ENCODE measurements at regions of chr1 and their contacts with region 1.

Region 1: DNA sequence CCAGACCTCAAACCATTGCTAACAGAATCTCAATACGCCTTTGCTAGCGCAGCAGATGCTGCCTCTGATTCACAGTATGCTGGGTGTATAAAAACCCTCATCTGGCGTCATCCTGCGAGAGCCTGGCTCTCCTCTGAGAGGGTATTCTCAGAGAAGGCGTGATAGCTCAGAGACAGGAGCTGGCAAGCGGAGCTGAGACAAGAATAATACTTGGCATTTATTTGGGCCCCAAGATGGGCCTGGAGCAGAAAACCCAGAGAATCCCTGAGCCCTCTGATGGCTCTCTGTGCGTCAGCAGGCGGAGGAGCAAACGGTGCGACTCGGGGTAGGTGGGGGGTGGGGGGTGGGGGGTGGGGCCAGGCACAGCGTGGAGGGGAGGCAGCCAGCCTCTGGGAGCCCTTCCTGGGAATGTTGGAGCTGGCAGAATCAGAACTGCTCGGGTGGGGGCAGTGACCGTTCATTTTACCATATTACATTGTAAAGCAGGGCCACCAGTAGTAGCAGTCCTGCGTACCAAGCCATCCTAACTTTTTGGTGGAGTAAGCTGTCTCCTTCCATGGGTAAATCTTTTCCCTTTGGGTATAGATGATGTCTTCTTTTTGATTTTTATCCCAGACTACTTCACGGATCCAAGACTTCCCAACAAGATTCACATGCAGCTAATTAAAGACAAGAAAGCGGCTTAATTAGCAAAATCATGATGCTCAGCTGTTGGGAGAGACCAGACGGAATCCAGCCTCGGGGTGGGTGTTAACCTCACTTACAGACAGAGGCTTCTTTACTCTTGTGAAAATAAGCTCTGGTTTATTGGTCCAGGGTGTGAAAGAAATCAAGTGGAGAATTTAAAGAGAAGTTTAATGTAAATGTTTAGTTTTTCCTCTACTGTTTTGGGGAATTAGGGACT is 7.1 kb downstream of the RIIAD1 start:
- DNase-seq: no peak
- H3K4me3 Mint-ChIP-seq: no peak overlapping the region
- H3K27ac Mint-ChIP-seq: no peak overlapping the region
- H3K4me1 Mint-ChIP-seq: no peaks in the 10 kb centered on the region
- H3K27me3 Mint-ChIP-seq: peaks cover 27% of the 10 kb centered on the region
- CTCF ChIP-seq: no peak

Region 2: DNA sequence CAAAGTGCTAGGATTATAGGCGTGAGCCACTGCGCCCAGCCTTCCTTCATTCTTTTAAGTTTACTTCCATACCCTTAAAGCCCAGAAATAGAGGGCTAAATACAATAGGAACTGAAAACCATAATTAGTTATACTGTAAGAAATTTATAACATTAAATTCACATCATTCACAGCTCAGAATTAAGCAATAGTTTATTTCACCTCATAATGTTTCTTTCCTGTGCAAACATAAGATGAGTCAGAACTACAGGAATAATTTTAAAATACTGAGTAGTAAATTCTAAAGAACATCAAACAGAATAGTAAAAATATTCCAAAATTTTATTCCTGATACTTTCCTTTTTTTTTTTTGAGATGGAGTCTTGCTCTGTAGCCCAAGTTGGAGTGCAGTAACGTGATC is 293.2 kb before region 1 on chr1:
- CTCF ChIA-PET with region 1: interaction called, 23 read pairs
- POLR2A ChIA-PET with region 1: no interaction called
- intact Hi-C with region 1: no loop called
- DNase-seq: peak; percentile 13
- H3K4me3 Mint-ChIP-seq: no peak overlapping the region
- H3K27ac Mint-ChIP-seq: peak overlapping the region; percentile 14
- H3K4me1 Mint-ChIP-seq: peaks cover 6% of the 10 kb centered on the region
- H3K27me3 Mint-ChIP-seq: no peaks in the 10 kb centered on the region
- CTCF ChIP-seq: no peak

Region 3: DNA sequence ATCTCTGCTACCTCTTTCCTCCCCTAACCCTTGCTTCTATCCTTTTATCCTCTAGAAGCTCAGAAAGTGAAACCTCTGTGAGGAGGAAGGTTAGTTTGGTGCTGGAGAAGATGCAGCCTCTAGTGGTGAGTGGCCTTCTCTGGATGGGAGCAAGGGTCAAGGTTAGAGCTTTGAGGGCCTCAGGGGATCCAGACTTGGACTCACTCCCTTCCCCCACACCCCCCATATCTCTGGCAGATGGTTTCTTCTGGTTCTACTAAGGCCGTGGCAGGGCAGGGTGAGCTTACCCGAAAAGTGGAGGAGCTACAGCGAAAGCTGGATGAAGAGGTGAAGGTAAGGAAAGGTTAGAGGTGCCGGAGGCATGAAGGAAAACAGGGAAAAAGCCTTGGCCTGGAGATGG is 208.0 kb before region 1 on chr1:
- CTCF ChIA-PET with region 1: interaction called, 14 read pairs
- POLR2A ChIA-PET with region 1: no interaction called
- intact Hi-C with region 1: no loop called
- DNase-seq: no peak
- H3K4me3 Mint-ChIP-seq: no peak overlapping the region
- H3K27ac Mint-ChIP-seq: peak overlapping the region; percentile 49
- H3K4me1 Mint-ChIP-seq: peaks cover 9% of the 10 kb centered on the region
- H3K27me3 Mint-ChIP-seq: no peaks in the 10 kb centered on the region
- CTCF ChIP-seq: no peak

Region 4: DNA sequence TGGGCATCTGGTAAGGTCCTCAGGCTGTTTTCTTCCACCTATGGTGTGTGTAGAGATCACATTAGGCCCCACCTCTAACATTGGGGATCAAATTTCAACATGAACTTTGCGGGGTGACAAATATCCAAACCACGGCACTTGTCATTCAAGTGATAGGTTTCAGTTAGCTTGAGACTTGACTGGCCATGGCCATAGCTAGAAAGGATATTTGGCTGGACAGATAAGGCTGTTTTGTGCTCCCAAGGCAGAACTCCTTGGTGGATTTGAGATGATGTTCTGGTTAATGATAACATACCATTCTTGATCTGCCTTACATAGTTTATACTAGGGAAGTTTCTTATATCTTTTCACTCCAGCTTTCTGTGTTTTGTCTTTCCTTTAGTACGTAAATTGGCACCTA is 60.3 kb before region 1 on chr1:
- CTCF ChIA-PET with region 1: interaction called, 12 read pairs
- POLR2A ChIA-PET with region 1: no interaction called
- intact Hi-C with region 1: no loop called
- DNase-seq: no peak
- H3K4me3 Mint-ChIP-seq: no peak overlapping the region
- H3K27ac Mint-ChIP-seq: no peak overlapping the region
- H3K4me1 Mint-ChIP-seq: no peaks in the 10 kb centered on the region
- H3K27me3 Mint-ChIP-seq: no peaks in the 10 kb centered on the region
- CTCF ChIP-seq: no peak

Region 5: DNA sequence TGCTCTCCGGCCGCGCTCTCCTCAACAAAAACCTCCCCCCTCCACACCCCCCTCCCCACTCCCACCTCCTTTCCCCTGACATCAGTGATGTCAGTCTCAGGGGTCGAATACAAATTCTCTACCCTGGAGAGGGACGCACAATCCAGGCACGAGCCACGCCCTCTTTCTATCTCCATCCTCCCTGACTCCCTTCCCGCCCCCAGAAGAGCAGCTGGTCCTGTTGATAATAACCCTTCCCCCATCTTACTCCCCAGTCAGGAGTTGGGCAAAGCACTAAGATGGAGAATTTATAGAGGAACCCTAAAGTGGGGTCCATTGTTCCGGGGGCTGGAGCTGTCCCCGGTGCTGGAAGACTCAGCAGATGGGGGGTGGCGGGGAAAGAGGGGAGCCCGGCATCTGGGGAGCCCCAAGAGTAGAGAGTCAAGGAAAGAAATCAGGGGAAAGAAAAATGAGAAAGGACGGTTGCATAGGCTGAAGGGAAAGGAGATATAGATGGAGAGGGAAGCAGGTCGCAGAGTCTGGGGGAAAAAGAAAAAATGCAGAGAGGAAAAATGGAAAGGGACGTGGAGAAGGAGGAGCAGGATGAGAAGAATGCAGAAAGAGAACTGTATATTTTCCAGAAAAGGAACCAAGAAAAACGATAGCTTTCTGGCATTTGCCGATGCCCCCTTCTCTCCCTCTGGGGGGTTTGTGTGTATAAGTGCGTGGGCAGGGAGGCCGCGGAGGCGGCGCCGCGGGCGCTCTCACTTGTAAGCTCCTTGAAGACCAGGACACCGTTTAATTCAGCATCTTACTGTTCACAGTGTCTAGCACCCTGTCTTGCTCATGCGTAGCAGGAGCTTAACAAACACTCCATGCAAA is 11.4 kb before region 1 on chr1 and contains the start of gene CELF3:
- CTCF ChIA-PET with region 1: interaction called, 16 read pairs
- POLR2A ChIA-PET with region 1: interaction called, 6 read pairs
- intact Hi-C with region 1: no loop called
- DNase-seq: no peak
- H3K4me3 Mint-ChIP-seq: no peak within 1 kb of the TSS
- H3K27ac Mint-ChIP-seq: no peak within 1 kb of the TSS
- H3K4me1 Mint-ChIP-seq: peaks cover 21% of the 10 kb centered on the region
- H3K27me3 Mint-ChIP-seq: peaks cover 67% of the 10 kb centered on the region
- CTCF ChIP-seq: no peak
- total RNA-seq, gene CELF3: not detected in 2 replicates

Region 6: DNA sequence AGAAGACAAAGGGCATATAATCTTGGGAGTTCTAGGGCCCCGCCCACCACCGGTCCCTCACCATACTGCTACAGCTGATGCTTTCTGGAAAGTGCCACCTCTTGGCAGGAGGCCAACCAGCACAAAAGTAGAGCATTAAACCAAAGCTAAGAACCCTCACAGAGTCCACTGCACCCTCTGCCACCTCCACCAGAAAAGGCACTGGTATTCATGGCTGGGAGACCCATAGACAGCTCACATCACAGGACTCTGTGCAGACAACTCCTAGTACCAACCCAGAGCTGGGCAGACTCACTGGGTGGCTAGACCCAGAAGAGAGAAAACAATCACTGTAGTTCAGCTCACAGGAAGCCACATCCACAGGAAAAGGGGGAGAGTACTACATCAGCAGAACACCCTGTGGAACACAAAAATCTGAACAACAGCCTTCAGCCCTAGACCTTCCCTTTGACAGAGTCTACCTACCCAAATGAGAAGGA is 170.1 kb after region 1 on chr1:
- CTCF ChIA-PET with region 1: no interaction called
- POLR2A ChIA-PET with region 1: no interaction called
- intact Hi-C with region 1: no loop called
- DNase-seq: no peak
- H3K4me3 Mint-ChIP-seq: no peak overlapping the region
- H3K27ac Mint-ChIP-seq: no peak overlapping the region
- H3K4me1 Mint-ChIP-seq: peaks cover 10% of the 10 kb centered on the region
- H3K27me3 Mint-ChIP-seq: no peaks in the 10 kb centered on the region
- CTCF ChIP-seq: no peak